Right ventricle myocardium superior (tissue), 1 donor: ENCODE measurements at regions of chr3 and their contacts with region 1.

Region 1: DNA sequence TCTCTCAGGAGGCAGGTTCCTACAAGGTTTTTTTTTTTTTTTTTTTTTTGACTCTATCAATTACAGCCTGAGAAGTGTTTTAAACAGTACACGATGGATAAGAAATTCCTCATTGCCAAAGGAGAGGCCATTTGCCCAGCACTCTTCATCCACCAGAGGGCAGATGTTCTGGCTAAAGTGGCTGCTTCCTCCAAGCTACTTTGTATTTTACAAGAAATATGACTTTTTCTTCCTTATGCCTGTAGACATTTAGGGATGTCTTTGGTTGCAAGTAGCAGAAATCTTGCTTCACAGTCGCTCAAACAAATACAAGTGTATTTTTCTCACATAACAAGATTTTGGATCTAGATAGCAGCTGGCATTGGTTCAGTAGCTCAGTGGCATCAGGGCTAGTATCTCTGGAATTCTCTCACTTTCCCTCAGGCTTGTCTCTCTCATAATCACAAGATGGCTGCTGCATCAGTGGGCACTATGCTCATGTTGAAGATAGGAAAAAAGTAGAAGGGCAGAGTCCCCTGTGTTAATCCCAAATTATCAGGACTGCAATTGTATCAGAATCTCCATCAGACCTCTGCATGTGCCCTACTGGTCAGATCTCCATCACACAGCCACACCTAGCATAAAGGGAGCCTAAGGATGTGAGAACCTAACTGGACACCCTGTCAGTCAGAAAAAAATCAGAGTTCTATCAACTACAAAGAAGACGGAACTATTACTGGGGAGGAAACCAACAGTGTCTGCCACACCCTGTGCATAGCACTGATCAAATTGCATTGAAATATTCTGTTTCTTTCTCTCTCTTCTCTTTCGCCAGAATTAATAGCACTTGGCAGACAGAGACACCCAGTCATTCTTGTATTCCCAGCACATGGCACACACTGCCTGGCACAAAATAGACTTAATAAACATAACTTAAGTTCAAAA is 138.9 kb upstream of the COL8A1 start:
- DNase-seq: no peak
- ATAC-seq: peak; percentile 82

Region 2: GRCh38 chr3:99468918-99469317 is 30.6 kb before region 1 on chr3:
- intact Hi-C with region 1: no loop called
- DNase-seq: no peak
- ATAC-seq: no peak

Region 3: GRCh38 chr3:99532246-99532645 is 32.7 kb after region 1 on chr3:
- intact Hi-C with region 1: loop called (anchors 5 kb)
- DNase-seq: no peak
- ATAC-seq: peak; percentile 80

Region 4: DNA sequence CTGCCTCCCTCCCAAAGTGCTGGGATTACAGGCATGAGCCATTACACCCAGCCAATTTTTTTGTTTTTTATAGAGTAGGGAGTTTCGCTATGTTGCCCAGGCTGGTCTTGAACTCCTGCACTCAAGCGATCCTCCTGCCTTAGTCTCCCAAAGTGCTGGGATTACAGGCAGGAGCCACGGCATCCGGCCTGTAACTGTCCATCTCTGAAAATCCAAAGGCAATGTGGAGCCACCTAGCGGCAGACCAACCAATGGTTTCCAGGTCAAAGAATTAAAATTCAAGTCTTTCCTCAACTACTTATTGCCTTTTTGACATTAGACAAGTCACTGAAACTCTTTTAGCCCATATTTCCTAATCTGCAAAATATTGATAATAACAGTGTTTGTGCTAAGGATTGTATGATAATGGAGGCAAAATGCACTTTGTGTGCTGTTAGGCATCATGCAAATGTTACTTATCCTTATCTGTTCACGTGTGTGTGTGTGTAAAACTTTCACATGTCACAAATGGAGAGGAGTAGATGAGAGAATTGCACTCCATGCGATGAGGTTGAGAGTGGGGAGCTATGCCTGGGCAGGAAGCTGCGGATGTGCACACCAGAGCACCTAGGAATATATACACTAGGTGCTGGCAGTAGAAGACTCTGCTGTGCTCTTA is 187.6 kb after region 1 on chr3:
- intact Hi-C with region 1: loop called (anchors 5 kb)
- DNase-seq: peak; percentile 58
- ATAC-seq: peak; percentile 65

Region 5: DNA sequence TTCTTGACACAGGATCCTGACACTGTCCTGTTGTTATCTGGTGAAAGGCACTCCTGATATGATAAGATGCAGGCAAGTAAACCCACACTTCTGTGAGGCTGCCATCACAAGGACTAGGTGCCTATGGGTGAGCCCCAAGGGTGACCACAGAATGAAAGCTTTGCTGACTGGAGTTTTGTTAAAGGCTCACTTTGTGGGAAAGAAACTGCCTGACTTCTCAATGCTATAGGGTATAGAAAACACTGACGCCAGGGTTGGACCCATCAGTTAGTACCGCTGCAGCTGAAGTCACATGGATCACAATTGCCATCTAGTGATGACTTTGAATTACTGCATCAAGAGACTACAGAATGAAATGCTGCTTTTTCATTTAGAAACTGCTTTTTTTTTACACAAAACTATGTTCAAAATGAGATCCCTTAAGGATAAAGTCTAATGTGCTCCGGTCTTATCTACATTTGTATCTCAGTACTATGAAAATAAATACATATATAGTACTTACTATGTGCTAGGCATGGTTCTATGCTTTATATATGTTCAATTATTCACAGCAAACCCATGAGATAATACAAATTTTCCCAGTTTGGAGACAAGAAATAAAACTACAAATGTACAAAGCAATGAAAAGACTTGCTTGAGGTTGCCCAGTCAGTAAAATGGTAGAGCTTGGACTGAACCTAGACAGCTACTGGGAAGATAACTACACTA is 253.9 kb after region 1 on chr3:
- intact Hi-C with region 1: loop called (anchors 5 kb)
- DNase-seq: no peak
- ATAC-seq: peak; percentile 83

Region 6: DNA sequence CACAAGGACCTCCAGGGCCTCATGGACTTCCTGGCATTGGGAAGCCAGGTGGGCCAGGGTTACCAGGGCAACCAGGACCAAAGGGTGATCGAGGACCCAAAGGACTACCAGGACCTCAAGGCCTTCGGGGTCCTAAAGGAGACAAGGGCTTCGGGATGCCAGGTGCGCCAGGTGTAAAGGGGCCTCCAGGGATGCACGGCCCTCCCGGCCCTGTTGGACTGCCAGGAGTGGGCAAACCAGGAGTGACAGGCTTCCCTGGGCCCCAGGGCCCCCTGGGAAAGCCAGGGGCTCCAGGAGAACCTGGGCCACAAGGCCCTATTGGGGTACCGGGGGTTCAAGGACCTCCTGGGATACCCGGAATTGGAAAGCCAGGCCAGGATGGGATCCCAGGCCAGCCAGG is 295.0 kb after region 1 on chr3:
- intact Hi-C with region 1: no loop called
- DNase-seq: no peak
- ATAC-seq: no peak